ENCODE measurements at regions of chr6 and their contacts with region 1.

Region 1: DNA sequence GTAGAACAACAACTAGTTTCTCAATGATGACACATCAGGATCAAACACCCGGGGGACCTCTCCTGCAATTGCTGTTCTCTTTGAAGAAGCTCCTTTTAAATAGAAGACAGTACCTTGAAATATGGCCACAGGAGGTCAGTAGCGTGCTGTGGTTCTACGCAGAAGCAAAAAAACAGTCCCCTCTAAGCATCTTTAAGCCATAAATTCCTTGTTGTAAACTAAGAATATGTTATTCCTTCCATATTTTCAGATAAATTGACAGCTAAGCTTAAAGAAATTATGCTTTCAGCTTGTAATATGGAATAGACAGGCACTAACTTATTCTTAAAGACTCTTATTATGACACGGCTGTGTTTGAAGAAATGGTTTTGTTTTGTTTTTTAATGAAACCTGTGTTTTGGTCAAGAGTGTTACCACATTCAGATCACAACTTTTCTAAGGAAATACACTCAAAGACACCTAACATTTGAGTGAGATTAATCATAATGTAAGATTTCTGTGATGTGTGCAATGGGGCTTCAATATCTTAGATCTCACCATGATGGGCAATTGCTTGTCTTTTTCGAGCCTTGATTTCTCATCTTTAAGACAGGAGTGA is 49.7 kb upstream of the IL20RA start:
- DNase-seq: peak; percentile 84
- ATAC-seq: peak; percentile 34
- H3K4me3 ChIP-seq: no peak overlapping the region
- H3K4me3 Mint-ChIP-seq: peak overlapping the region; percentile 64
- H3K27ac ChIP-seq: peak overlapping the region; percentile 37 to 81
- H3K27ac Mint-ChIP-seq: peak overlapping the region; percentile 93
- H3K4me1 ChIP-seq: peaks cover 59% of the 10 kb centered on the region in 2 donors
- H3K4me1 Mint-ChIP-seq: peaks cover 59% of the 10 kb centered on the region
- H3K27me3 ChIP-seq: no peaks in the 10 kb centered on the region
- H3K27me3 Mint-ChIP-seq: no peaks in the 10 kb centered on the region
- CTCF ChIP-seq: peak; percentile 90

Region 2: DNA sequence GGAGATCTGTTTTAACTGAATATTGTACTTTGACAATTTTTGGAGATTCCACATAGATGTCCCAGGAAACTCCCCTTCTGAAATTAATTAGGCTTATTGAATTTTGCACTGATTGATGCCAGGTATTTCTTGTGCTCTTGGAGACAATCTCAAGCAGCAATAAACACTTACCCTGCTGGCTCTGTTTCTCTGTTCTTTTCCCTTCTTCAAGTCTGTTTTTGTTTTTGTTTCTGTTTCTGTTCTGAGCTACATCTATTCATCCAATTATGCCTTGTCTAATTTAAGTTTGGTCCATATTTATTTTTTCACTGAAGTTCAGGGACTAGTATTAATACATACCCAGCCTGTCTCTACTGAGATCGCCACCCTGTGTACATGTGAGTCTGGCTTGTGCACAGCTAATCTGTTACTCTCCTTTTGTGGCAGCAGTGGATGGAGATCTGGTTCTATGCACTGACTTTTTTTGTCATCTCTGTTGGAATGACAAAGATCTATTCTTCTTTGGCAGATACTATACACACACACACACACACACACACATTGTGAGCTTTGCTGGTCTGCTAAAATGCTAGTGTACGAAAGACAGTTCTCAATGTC is 27.0 kb after region 1 on chr6:
- CTCF ChIA-PET with region 1: interaction called, 31 read pairs
- POLR2A ChIA-PET with region 1: no interaction called
- intact Hi-C with region 1: loop called (anchors 2 kb)
- DNase-seq: peak; percentile 39
- ATAC-seq: peak; percentile 28
- H3K4me3 ChIP-seq: peak overlapping the region in 1 of 5 experiments; percentile 25
- H3K4me3 Mint-ChIP-seq: peak overlapping the region; percentile 83
- H3K27ac ChIP-seq: peak overlapping the region; percentile 22 to 74
- H3K27ac Mint-ChIP-seq: peak overlapping the region; percentile 91
- H3K4me1 ChIP-seq: peaks cover 27 to 29% of the 10 kb centered on the region in 2 donors
- H3K4me1 Mint-ChIP-seq: peaks cover 35% of the 10 kb centered on the region
- H3K27me3 ChIP-seq: no peaks in the 10 kb centered on the region
- H3K27me3 Mint-ChIP-seq: no peaks in the 10 kb centered on the region
- CTCF ChIP-seq: no peak

Region 3: DNA sequence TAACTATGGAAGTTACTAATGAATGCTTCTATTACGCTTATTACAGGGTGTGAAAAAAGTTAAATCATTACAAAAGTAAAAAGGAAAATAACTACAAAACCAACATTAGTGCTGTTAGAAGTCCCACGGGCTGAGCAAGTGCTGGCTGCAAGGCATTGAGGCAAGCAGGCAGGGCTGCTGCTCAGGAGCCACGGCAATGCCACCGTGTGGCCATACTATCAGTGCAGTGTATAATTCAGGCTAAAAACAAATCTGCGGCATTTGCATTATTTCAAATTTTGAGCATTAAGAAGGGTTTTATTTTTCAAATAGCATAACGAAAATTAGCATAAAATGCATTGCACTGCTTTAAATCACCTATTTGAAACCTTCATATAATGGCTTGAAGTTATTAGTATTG is 107.6 kb after region 1 on chr6:
- CTCF ChIA-PET with region 1: interaction called, 66 read pairs
- POLR2A ChIA-PET with region 1: no interaction called
- intact Hi-C with region 1: loop called (anchors 1 kb)
- DNase-seq: peak; percentile 55
- ATAC-seq: peak; percentile 74
- H3K4me3 ChIP-seq: no peak overlapping the region
- H3K4me3 Mint-ChIP-seq: no peak overlapping the region
- H3K27ac ChIP-seq: no peak overlapping the region
- H3K27ac Mint-ChIP-seq: peak overlapping the region; percentile 61
- H3K4me1 ChIP-seq: peaks cover 10 to 11% of the 10 kb centered on the region in 2 donors
- H3K4me1 Mint-ChIP-seq: peaks cover 31% of the 10 kb centered on the region
- H3K27me3 ChIP-seq: no peaks in the 10 kb centered on the region
- H3K27me3 Mint-ChIP-seq: no peaks in the 10 kb centered on the region
- CTCF ChIP-seq: peak; percentile 67

Region 4: GRCh38 chr6:137218917-137219663 is 124.6 kb after region 1 on chr6 and contains the start of gene IFNGR1:
- CTCF ChIA-PET with region 1: interaction called, 16 read pairs
- POLR2A ChIA-PET with region 1: interaction called, 13 read pairs
- intact Hi-C with region 1: no loop called
- DNase-seq: peak; percentile 96
- ATAC-seq: peak; percentile 86
- H3K4me3 ChIP-seq: peak within 1 kb of the TSS; percentile 76 to 99 (median 88)
- H3K4me3 Mint-ChIP-seq: peak within 1 kb of the TSS; percentile 97
- H3K27ac ChIP-seq: peak within 1 kb of the TSS; percentile 95 to 97
- H3K27ac Mint-ChIP-seq: peak within 1 kb of the TSS; percentile 97
- H3K4me1 ChIP-seq: peaks cover 78 to 81% of the 10 kb centered on the region in 2 donors
- H3K4me1 Mint-ChIP-seq: peaks cover 79% of the 10 kb centered on the region
- H3K27me3 ChIP-seq: no peaks in the 10 kb centered on the region
- H3K27me3 Mint-ChIP-seq: no peaks in the 10 kb centered on the region
- CTCF ChIP-seq: no peak
- total RNA-seq, gene IFNGR1: 48.2 and 51.2 TPM in 2 replicates

Region 5: DNA sequence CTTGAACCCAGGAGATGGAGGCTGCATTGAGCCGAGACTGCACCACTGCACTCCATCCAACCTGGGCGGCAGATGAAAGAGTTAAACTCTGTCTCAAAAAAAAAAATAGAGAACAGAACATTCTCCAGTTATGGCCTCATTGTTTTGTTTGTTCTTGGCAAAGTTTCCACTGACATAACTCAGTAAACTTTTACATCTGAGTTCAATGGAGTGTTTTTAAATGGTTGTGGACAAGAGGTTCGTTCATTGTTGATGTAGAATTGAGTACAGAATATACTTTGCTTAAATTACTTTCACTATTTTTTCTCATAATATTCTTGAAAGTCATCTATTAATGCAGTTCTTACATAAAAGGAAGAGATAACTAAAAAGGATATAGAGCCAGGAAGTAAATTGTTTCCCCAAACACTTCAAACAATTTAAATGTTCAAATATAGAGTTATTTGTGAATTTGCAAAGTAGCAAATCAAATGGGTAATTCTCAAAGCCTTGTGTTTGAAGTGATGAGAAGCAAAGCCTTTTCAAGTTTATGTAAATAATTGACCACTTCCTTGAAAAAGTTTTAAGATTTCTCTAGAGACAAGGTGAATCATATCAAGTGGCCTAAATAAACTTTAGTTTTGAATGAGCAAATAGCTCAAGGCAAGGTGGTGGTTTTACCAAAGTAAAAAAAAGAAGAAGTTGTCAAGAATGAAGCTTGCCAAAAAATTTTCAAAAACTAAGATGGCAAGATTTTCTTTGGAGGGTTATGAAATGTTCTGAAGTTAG is 167.1 kb after region 1 on chr6:
- CTCF ChIA-PET with region 1: interaction called, 5 read pairs
- POLR2A ChIA-PET with region 1: no interaction called
- intact Hi-C with region 1: loop called (anchors 2 kb)
- DNase-seq: peak; percentile 58
- ATAC-seq: peak; percentile 88
- H3K4me3 ChIP-seq: no peak overlapping the region
- H3K4me3 Mint-ChIP-seq: peak overlapping the region; percentile 14
- H3K27ac ChIP-seq: peak overlapping the region; percentile 25 to 40
- H3K27ac Mint-ChIP-seq: peak overlapping the region; percentile 27
- H3K4me1 ChIP-seq: peaks cover 19 to 25% of the 10 kb centered on the region in 2 donors
- H3K4me1 Mint-ChIP-seq: peaks cover 30% of the 10 kb centered on the region
- H3K27me3 ChIP-seq: no peaks in the 10 kb centered on the region
- H3K27me3 Mint-ChIP-seq: no peaks in the 10 kb centered on the region
- CTCF ChIP-seq: no peak

Region 6: DNA sequence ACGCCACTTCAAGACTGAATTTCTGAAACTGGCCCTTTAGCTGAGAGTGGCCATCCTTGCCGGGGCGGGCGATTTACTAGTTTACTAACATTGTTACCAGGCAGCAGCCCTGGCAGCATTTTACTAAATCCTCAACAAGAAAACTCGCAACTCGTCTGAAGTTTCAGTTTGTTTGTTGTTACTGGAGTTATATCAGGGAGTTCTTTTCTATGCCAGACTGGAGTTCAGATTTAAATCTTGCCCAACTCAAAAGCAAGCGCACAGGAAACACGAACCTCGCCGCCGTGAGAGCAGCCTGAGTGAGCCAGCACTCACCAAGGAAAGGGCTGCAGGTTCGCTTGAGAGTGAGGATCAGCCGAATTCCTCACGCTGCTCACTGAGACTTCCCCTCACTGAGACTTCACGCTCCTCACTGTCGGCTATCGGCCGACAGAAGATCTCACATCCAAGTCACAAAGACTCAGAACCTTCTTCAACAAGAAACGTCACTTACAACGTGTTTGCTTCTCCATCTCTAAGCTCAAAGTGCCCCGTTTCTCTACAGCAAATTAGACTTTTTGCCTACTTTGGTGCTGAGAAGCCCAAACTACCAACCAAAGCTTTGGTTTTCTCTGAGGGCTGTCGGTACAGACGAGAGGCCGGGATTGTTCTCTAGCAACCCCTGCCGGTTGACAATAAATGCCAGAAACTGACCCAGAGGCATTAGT is 320.8 kb after region 1 on chr6:
- CTCF ChIA-PET with region 1: interaction called, 18 read pairs
- POLR2A ChIA-PET with region 1: no interaction called
- intact Hi-C with region 1: loop called (anchors 2 kb)
- DNase-seq: peak; percentile 81
- ATAC-seq: peak; percentile 97
- H3K4me3 ChIP-seq: peak overlapping the region; percentile 39 to 77 (median 63)
- H3K4me3 Mint-ChIP-seq: peak overlapping the region; percentile 89
- H3K27ac ChIP-seq: peak overlapping the region; percentile 14 to 65
- H3K27ac Mint-ChIP-seq: peak overlapping the region; percentile 43
- H3K4me1 ChIP-seq: peaks cover 8 to 9% of the 10 kb centered on the region in 2 donors
- H3K4me1 Mint-ChIP-seq: peaks cover 10% of the 10 kb centered on the region
- H3K27me3 ChIP-seq: peaks cover 0 to 9% (median 3%) of the 10 kb centered on the region in 4 experiments
- H3K27me3 Mint-ChIP-seq: peaks cover 7% of the 10 kb centered on the region
- CTCF ChIP-seq: peak; percentile 79

Measured in B cell (primary cell).